Activated CD8-positive, alpha-beta memory T cell treated with anti-CD3 and anti-CD28 coated beads, Interleukin-2, amount 10 ng/mL, durations not matched to agents 7 days and 5 days (primary cell): ENCODE measurements at regions of chr4 and their contacts with region 1.

Region 1: DNA sequence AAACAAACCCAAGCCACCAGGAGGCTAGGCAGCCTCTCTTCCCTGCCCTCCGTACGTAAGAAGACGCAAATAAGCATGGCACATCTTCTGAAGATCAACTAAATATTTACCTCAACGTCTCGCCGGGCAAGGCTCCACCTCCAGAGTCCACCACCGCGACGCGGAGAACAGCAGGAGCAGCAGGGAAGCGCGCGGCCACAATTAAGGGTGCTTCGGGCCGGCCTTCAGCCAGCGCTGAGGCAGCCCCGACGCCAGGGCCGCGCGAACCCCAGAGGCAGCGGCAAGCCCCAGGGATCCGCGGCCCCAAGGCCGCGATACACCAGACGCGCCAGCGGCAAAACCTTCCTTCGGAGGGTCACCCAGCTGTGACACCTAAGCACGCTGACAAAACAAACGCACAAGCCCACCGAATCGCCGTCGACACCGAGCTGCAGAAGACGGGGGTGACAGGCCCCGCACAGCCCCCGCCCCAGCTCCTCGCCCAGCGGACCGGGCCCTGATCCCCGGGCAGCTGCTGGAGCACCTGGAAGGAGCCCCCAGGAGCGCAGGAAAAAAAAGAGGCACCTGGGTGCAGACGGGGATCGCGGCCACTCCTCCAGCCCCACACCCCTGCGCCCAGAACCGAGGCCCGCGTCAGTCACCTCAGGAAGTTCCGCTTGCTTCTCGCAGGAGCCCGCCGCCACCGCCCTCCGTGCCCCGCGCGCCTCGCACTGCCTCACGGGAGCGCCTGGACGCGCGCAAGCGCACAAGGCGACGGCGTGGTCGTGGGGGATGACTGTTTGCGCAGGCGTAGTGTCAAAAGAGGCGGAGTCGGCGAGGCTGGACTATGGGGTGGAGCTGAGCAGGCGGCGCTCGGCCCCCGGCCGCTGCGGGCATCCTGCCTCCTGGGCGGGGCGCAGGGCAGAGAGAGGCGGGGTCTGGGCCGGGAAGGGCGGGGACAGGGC is at the starts of genes HAUS3 and POLN:
- DNase-seq: peak; percentile 99
- ATAC-seq: peak; percentile 93
- H3K4me3 Mint-ChIP-seq: peak within 1 kb of the TSS; percentile 84
- H3K27ac Mint-ChIP-seq: peak within 1 kb of the TSS; percentile 91
- H3K4me1 Mint-ChIP-seq: peaks cover 47% of the 10 kb centered on the region
- H3K27me3 Mint-ChIP-seq: no peaks in the 10 kb centered on the region
- total RNA-seq, gene HAUS3: 29.8 to 34.5 TPM
- total RNA-seq, gene POLN: 5.5 to 5.6 TPM

Region 2: DNA sequence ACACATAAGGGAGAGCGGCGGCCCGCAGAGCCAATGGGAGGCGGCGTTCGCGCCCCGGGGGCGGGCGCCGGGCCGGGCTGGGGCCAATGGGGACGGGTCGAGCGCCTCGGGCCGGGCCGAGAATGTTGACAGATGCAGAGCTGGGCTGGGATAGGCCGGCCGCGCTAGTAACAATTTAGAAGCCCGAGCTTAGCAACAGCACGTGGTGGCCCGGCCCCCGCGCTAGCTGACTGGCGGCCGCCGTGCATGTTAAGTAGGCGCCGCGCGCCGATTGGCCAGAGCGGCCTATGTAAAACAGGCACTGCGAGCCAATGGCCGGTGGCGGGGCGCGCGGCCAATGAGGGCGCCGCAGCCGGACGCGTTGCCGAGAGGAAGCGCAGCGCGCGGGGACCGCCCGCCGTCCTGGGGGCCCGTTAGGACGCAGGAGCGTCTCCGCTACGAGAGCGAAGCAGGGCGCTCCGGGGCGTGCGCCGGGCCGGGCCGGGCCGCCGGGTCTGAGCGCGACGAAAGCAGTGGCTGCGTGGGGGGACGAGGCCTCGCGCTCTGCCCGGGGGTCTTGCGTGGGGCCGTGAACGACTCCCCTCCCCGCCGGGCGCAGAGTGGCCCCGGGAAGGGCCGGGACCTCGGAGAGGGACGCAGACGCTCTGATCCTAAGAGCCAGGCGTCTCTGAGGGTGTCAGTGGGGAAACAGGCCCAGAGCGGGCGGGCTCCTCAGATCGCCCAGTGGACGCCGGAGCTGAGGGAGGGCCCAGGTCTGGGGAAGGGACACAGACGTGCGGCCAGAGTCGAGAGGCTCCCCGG is 20.7 kb after region 1 on chr4:
- CTCF ChIA-PET with region 1: interaction called, 13 read pairs
- DNase-seq: peak; percentile 99
- ATAC-seq: peak; percentile 93
- H3K4me3 Mint-ChIP-seq: peak overlapping the region; percentile 64
- H3K27ac Mint-ChIP-seq: peak overlapping the region; percentile 75
- H3K4me1 Mint-ChIP-seq: peaks cover 1% of the 10 kb centered on the region
- H3K27me3 Mint-ChIP-seq: no peaks in the 10 kb centered on the region